Spleen (tissue), 13 donors: ENCODE measurements at regions of chr14 and their contacts with region 1.

Region 1: GRCh38 chr14:23057757-23058653 is 685 bp upstream of the CDH24 start:
- DNase-seq: peak; percentile 96
- H3K4me3 ChIP-seq: peak overlapping the region; percentile 60 to 91 (median 76)
- H3K27ac ChIP-seq: peak overlapping the region in 6 of 8 donors; percentile 44 to 71 (median 62)
- H3K4me1 ChIP-seq: peaks cover 13 to 41% (median 27%) of the 10 kb centered on the region in 6 donors
- H3K27me3 ChIP-seq: peaks cover 0 to 8% (median 0%) of the 10 kb centered on the region in 7 donors
- CTCF ChIP-seq: peak; percentile 89 to 98 (median 95)
- POLR2A ChIP-seq: no peak

Region 2: DNA sequence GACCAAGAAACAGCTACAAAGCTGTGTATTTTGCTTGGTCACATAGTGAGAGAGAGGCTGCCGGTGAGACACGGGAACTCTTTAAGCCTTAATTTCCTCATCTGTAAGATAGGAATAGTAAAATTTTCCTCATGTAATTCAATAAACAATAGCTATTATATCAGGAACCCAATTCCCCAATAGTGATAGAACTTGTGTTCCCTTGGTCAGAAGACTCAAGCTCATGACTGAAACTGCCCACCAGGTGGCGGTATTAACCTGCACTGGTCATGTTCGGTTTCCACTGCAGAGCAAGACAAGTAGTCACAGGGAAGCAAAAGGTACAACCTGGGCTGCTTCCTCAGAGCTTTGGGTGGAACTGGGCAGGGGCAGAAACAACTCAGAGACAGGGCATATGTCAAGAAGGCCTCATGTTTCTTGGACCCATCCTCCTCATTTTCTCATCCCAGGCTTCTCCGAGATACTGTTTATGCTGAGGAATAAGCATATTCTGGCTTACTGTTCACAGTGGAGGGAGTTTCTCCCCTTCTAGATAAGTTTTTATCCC is 71.4 kb before region 1 on chr14:
- intact Hi-C with region 1: loop called (anchors 2 kb)
- DNase-seq: peak; percentile 94
- H3K4me3 ChIP-seq: no peak overlapping the region
- H3K27ac ChIP-seq: no peak overlapping the region
- H3K4me1 ChIP-seq: peaks cover 7 to 30% (median 20%) of the 10 kb centered on the region in 6 donors
- H3K27me3 ChIP-seq: peaks cover 0 to 16% (median 10%) of the 10 kb centered on the region in 7 donors
- CTCF ChIP-seq: peak; percentile 80 to 95 (median 88)
- POLR2A ChIP-seq: no peak

Region 3: DNA sequence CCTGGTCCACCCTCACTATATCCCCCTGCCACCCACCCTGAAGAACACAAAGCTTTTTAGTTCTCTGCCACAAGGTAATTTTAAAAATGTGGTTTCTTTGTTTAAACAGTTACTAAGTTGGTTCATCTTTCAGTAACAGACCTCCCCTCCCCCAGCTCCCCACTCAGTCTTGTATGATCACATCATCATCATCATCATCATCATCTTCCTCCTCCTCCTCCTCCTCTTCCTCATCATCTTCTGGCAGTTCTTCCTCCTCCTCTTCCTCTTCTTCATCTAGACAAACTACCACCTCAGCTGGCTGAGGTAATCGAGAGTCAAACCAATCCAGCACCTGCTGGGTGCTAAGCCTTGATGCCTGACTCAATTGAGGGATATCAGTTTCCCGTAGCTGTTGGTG is 217.4 kb after region 1 on chr14:
- intact Hi-C with region 1: no loop called
- DNase-seq: no peak
- H3K4me3 ChIP-seq: no peak overlapping the region
- H3K27ac ChIP-seq: no peak overlapping the region
- H3K4me1 ChIP-seq: no peaks in the 10 kb centered on the region
- H3K27me3 ChIP-seq: no peaks in the 10 kb centered on the region
- CTCF ChIP-seq: no peak
- POLR2A ChIP-seq: no peak